WTC11 (cell line): ENCODE measurements at regions of chr3 and their contacts with region 1.

Region 1: DNA sequence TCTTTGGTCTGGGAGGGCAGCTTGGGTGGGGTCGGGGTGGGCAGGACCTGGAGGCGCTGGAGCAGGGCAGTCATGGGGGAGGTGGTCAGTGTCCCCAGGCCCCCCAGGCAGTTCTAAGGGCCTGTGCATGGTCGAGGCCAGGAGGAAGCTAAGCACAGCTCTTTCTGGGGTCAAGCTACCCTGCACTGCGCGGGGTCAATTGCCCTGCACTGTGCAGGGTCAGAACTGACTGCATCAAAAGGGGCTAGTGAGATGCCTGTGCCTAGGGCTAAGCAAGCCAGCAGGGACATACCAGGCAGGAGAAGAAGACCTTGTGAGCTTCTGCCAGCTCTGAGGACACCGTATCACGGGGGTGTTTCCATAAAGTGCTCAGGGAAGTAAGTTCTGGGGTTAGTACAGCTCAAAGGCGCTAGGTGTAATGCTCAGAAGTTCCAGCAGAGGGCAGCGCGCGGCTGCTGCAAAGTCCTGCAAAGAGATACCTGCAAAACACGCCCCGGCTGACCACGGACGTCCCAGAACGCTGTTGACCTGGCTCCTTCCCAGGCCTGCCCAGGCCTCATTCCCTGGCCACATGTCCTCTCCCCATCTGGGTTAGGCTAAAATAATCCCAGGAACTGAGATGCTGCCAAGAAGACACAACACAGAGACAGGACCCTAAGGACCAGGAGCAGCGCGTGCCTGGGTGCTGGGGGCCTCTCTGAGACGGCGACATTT is 18.8 kb upstream of the IQSEC1 start:
- DNase-seq: peak; percentile 92
- ATAC-seq: peak; percentile 84
- H3K4me3 Mint-ChIP-seq: no peak overlapping the region
- H3K27ac Mint-ChIP-seq: no peak overlapping the region
- H3K4me1 Mint-ChIP-seq: peaks cover 21% of the 10 kb centered on the region
- H3K27me3 Mint-ChIP-seq: no peaks in the 10 kb centered on the region
- CTCF ChIP-seq: peak; percentile 99

Region 2: DNA sequence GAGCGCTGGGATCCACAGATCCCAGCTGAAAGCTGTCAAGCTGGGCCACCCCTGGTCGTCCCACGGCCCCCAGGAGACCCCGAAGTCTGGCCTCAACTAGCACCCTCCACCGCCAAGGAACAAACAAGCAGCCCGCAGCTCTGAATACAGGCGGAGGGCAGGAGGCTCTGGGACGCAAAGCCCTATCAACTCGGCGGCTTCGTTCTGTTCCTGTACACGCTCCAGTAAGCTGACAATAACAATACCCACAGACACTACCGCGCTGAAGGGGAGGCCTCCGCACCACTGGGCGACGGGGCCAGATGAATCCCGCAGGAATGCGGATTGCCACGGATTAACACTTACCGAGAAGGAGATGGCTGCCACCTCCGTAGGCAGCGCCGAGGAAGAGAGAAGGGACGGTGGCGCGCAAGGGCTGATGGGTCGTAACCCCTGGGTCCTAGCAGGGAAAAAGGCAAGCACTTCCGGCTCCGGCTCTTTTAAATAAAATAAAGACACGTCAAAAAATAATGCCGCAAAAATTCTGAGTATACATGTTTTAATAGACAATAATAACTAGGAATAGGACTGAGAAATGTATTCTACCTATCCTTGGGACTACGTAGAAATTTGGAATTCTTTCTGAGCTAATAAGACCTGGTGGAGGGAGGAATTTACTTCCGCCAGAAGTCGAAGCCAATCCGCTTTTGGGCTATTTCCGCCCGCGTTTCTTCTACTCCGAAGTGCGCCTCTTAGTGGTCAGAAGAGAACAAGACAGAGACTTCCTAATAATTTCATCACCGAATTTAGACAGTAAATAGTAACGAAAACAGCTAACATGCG is 250.7 kb before region 1 on chr3 and contains the start of gene RPL32:
- CTCF ChIA-PET with region 1: no interaction called
- POLR2A ChIA-PET with region 1: no interaction called
- DNase-seq: peak; percentile 76
- ATAC-seq: peak; percentile 78
- H3K4me3 Mint-ChIP-seq: peak within 1 kb of the TSS; percentile 98
- H3K27ac Mint-ChIP-seq: peak within 1 kb of the TSS; percentile 99
- H3K4me1 Mint-ChIP-seq: peaks cover 51% of the 10 kb centered on the region
- H3K27me3 Mint-ChIP-seq: peaks cover 4% of the 10 kb centered on the region
- CTCF ChIP-seq: peak; percentile 18; the same call in 1 of the 2 replicates
- total RNA-seq, gene RPL32: 1,643 to 1,831 TPM (median 1,818 TPM) in 3 replicates

Region 3: GRCh38 chr3:12926660-12927059 is 165.4 kb before region 1 on chr3:
- CTCF ChIA-PET with region 1: no interaction called
- POLR2A ChIA-PET with region 1: no interaction called
- DNase-seq: no peak
- ATAC-seq: no peak
- H3K4me3 Mint-ChIP-seq: no peak overlapping the region
- H3K27ac Mint-ChIP-seq: no peak overlapping the region
- H3K4me1 Mint-ChIP-seq: no peaks in the 10 kb centered on the region
- H3K27me3 Mint-ChIP-seq: no peaks in the 10 kb centered on the region
- CTCF ChIP-seq: no peak

Region 4: GRCh38 chr3:13040361-13041074 is 51.5 kb before region 1 on chr3:
- CTCF ChIA-PET with region 1: interaction called, 13 read pairs
- POLR2A ChIA-PET with region 1: no interaction called
- DNase-seq: no peak
- ATAC-seq: no peak; the same call in 1 of the 2 replicates
- H3K4me3 Mint-ChIP-seq: no peak overlapping the region
- H3K27ac Mint-ChIP-seq: peak overlapping the region; percentile 80
- H3K4me1 Mint-ChIP-seq: peaks cover 13% of the 10 kb centered on the region
- H3K27me3 Mint-ChIP-seq: peaks cover 2% of the 10 kb centered on the region; the same call in 1 of the 2 replicates
- CTCF ChIP-seq: no peak

Region 5: GRCh38 chr3:13135251-13135810 is 43.3 kb after region 1 on chr3:
- CTCF ChIA-PET with region 1: interaction called, 14 read pairs
- POLR2A ChIA-PET with region 1: no interaction called
- DNase-seq: no peak
- ATAC-seq: no peak
- H3K4me3 Mint-ChIP-seq: no peak overlapping the region
- H3K27ac Mint-ChIP-seq: no peak overlapping the region
- H3K4me1 Mint-ChIP-seq: peaks cover 18% of the 10 kb centered on the region
- H3K27me3 Mint-ChIP-seq: no peaks in the 10 kb centered on the region
- CTCF ChIP-seq: no peak

Region 6: DNA sequence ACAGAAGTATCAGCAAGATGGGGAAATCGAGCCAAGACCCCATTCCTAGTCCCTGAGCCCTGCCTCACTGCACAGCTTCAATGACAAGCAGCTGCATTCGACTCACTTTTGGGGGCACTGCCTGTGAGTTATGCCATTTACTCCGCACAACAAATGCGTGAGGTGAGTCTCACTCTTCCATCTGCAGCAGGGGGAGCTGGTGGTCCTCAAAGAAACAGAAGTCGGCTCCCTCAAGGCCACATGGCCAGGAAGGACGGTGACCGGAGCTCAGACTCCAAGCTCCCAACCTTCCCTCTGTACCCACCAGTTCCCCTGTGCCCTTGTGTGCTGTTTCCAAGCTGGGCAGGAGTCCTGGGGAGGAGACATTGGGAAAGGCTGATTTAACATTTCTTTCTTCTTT is 108.9 kb after region 1 on chr3:
- CTCF ChIA-PET with region 1: interaction called, 27 read pairs
- POLR2A ChIA-PET with region 1: no interaction called
- DNase-seq: peak; percentile 64
- ATAC-seq: peak; percentile 80
- H3K4me3 Mint-ChIP-seq: no peak overlapping the region
- H3K27ac Mint-ChIP-seq: peak overlapping the region; percentile 36; the same call in 1 of the 2 replicates
- H3K4me1 Mint-ChIP-seq: peaks cover 18% of the 10 kb centered on the region
- H3K27me3 Mint-ChIP-seq: no peaks in the 10 kb centered on the region
- CTCF ChIP-seq: 0 out of 2 replicates have a peak, but pooled peaks have one; percentile 19

Region 7: GRCh38 chr3:13452490-13453335 is 360.7 kb after region 1 on chr3:
- CTCF ChIA-PET with region 1: interaction called, 24 read pairs
- POLR2A ChIA-PET with region 1: no interaction called
- DNase-seq: no peak
- ATAC-seq: no peak
- H3K4me3 Mint-ChIP-seq: peak overlapping the region; percentile 78
- H3K27ac Mint-ChIP-seq: peak overlapping the region; percentile 96
- H3K4me1 Mint-ChIP-seq: peaks cover 20% of the 10 kb centered on the region
- H3K27me3 Mint-ChIP-seq: no peaks in the 10 kb centered on the region
- CTCF ChIP-seq: no peak

Region 8: DNA sequence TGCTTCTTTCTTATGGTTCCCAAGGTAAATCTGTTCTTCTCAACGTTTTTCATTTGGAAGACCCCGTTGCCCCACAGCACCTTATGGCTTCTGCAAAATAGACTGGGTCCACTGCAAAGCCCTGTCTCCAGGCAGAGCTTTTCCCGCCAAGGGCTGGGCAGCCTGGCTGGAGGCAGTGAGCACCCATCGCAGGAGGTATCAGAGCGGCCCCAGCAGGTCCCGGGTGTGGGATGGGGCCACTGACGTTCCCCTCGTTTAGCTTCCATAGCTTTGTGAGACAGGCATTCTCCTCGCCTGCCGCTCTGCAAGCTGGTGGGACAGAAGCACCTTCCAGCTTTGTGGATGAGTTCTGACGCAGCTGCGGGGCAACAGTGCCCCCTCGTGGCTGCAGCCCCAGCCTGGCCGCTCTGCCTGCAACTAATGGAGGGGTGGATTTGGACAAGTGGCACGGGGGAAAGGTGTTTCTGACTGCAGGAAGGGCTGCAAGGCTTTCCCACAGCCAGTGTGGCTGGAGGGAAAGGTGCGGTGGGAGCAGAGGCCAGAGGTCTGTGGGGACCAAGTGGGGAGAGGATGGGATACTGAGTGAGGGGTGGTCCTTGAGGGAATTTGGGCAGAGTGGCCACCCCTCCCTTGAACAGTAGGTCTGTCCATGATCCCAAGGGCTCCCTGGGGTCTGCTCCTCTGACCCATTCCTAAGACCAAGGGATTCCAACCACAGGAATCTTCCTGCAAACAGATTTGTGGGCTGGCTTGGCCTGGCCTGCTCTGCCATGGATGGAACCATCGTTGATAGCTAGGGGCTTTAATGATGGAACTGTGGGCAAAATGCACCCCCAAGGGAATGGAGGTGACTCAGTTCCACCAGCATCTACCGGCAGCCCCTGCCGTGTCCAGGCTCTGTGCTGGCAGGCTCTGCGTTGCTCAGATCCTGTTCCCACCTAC is 556.3 kb after region 1 on chr3:
- CTCF ChIA-PET with region 1: interaction called, 29 read pairs
- POLR2A ChIA-PET with region 1: no interaction called
- DNase-seq: peak; percentile 96
- ATAC-seq: peak; percentile 77
- H3K4me3 Mint-ChIP-seq: no peak overlapping the region
- H3K27ac Mint-ChIP-seq: peak overlapping the region; percentile 93
- H3K4me1 Mint-ChIP-seq: peaks cover 20% of the 10 kb centered on the region
- H3K27me3 Mint-ChIP-seq: peaks cover 7% of the 10 kb centered on the region
- CTCF ChIP-seq: peak; percentile 96